PC-9 (cell line): ENCODE measurements at regions of chr9 and their contacts with region 1.

Region 1: DNA sequence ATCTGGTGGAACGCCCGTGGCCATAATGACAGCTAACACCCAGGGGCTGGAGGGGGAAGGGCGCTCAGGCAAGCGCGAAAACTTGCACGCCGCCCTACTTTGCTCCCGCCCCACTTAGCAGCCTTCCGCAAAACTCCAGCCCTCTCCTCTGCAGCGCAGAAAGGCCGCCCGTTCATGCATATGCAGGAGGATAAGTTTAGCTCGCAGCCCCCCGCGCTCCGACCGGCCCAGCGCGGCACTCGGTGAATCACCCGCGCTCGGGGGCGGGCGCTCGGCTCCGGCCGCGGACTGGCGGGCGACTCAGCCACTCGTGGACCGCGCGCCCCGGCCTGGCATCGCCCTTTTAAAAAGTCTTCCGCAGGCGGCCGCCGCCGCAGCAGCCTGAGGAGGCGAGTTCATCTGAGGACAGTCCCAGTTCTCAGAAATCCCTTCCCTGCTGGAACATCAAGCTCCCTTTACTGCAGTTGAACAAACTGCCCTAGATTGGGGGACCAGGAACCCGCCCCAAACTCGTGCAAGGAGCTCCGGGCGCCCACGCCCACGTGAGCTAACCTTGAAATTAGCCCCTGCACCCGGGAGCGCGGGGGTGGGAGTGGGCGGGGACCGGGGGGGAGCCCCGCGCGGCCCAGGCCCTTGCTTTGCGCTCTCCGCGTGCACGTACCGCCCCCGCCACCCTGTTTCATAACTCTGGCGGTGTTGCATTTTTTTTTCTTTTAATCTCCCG is 4.5 kb upstream of the KLF9 start:
- DNase-seq: peak; percentile 85 to 97
- H3K4me3 ChIP-seq: peak overlapping the region; percentile 82
- H3K27ac ChIP-seq: peak overlapping the region; percentile 97
- H3K4me1 ChIP-seq: peaks cover 23% of the 10 kb centered on the region
- H3K27me3 ChIP-seq: no peaks in the 10 kb centered on the region
- CTCF ChIP-seq: no peak

Region 2: GRCh38 chr9:69104830-69105527 is 1314.0 kb before region 1 on chr9:
- CTCF ChIA-PET with region 1: no interaction called
- POLR2A ChIA-PET with region 1: no interaction called
- intact Hi-C with region 1: loop called (anchors 5 kb)
- DNase-seq: peak; percentile 93 to 97
- H3K4me3 ChIP-seq: peak overlapping the region; percentile 25; the same call in 1 of the 2 replicates
- H3K27ac ChIP-seq: peak overlapping the region; percentile 65
- H3K4me1 ChIP-seq: peaks cover 38% of the 10 kb centered on the region
- H3K27me3 ChIP-seq: no peaks in the 10 kb centered on the region
- CTCF ChIP-seq: no peak

Region 3: DNA sequence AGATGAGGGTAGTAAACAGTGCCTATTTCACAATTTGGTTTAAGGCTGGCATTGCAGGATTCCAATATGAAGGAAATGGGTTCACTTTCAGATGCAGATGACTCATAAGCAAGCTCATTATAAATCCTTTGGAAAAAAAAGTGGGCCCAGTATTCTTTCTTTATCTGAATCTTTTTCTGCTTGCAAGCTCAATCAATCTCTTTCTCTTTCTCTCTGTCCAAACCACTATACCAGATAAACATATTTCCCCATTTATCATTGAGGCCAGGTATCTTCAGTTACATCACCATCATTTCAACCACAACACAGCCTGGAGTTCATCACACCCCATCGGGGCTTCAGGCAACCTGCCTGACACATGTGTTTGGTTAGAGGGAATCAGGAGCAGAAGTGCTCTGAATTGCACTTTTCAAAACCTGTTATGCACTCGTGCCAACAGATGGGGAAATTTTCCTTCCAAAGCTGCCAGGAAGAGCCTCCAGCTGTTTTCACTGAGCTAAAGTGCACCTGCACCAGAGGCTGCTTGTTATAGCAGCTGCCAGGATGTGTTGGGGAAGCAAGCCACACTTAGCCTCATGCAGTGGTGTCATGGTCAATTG is 405.3 kb before region 1 on chr9:
- CTCF ChIA-PET with region 1: no interaction called
- POLR2A ChIA-PET with region 1: interaction called, 10 read pairs
- intact Hi-C with region 1: no loop called
- DNase-seq: peak in 1 of 2 experiments; percentile 65
- H3K4me3 ChIP-seq: no peak overlapping the region
- H3K27ac ChIP-seq: peak overlapping the region; percentile 33; the same call in 1 of the 2 replicates
- H3K4me1 ChIP-seq: peaks cover 23% of the 10 kb centered on the region
- H3K27me3 ChIP-seq: no peaks in the 10 kb centered on the region
- CTCF ChIP-seq: no peak

Region 4: GRCh38 chr9:70034292-70034711 is 384.7 kb before region 1 on chr9:
- CTCF ChIA-PET with region 1: no interaction called
- POLR2A ChIA-PET with region 1: no interaction called
- intact Hi-C with region 1: no loop called
- DNase-seq: no peak
- H3K4me3 ChIP-seq: no peak overlapping the region
- H3K27ac ChIP-seq: no peak overlapping the region
- H3K4me1 ChIP-seq: peaks cover 20% of the 10 kb centered on the region
- H3K27me3 ChIP-seq: no peaks in the 10 kb centered on the region
- CTCF ChIP-seq: no peak

Region 5: DNA sequence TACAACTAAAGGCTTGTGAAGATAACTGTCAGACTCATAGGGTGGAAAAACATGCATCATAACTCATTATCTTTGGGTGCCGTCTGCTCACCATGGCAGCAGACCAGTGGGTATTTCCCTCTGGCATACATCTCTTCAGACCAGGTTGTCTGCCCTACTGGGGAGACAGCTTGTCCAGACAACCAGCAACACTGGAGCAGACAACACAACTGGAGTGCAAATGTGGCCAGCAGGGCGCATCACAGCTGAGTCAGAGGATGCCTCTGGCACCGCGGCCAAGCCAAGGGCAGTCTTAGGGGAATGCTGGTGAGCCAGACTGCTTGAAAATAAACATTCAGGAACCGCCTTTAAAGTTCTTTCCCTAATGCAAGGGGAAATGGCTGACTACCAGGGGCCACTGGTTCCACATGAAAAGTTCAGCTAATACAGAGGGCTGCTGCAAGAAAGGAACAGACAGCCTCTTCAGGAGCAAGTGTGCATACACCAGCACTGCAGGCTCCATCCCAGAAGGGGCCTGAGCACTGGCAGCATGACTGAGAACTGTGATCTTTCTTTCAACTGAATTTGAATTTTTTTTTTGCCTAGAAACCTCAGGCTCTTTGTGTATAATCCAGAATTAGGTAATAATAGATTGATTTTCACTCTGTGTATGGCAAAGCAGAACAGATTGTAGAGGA is 298.0 kb before region 1 on chr9:
- CTCF ChIA-PET with region 1: no interaction called
- POLR2A ChIA-PET with region 1: no interaction called
- intact Hi-C with region 1: no loop called
- DNase-seq: peak; percentile 50 to 70
- H3K4me3 ChIP-seq: no peak overlapping the region
- H3K27ac ChIP-seq: no peak overlapping the region
- H3K4me1 ChIP-seq: peaks cover 25% of the 10 kb centered on the region
- H3K27me3 ChIP-seq: no peaks in the 10 kb centered on the region
- CTCF ChIP-seq: no peak

Region 6: DNA sequence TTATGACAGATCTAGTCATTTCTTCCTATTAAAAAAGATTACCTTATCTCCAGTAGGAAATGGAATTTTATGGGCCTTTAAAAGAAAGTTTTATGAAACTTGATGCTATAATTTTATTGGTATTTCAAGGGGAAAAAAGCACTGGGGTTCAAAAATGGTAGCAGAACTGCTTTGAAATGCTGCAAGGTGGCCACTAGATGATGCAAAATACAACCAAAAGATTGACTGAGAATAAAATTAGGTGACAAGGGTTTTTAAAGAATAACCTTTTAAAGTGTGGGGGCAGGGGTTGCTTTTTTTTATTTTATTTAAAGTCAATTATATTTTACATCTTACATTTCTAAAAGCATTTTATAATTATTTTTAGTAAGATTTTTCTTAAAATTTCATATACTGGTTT is 66.2 kb before region 1 on chr9:
- CTCF ChIA-PET with region 1: no interaction called
- POLR2A ChIA-PET with region 1: no interaction called
- intact Hi-C with region 1: loop called (anchors 5 kb)
- DNase-seq: no peak
- H3K4me3 ChIP-seq: no peak overlapping the region
- H3K27ac ChIP-seq: no peak overlapping the region
- H3K4me1 ChIP-seq: no peaks in the 10 kb centered on the region
- H3K27me3 ChIP-seq: no peaks in the 10 kb centered on the region
- CTCF ChIP-seq: peak; percentile 41; the same call in 1 of the 2 replicates

Region 7: GRCh38 chr9:70553707-70554673 is 135.0 kb after region 1 on chr9:
- CTCF ChIA-PET with region 1: no interaction called
- POLR2A ChIA-PET with region 1: interaction called, 7 read pairs
- intact Hi-C with region 1: loop called (anchors 5 kb)
- DNase-seq: peak in 1 of 2 experiments; percentile 65
- H3K4me3 ChIP-seq: no peak overlapping the region
- H3K27ac ChIP-seq: no peak overlapping the region
- H3K4me1 ChIP-seq: peaks cover 9% of the 10 kb centered on the region; the same call in 1 of the 2 replicates
- H3K27me3 ChIP-seq: no peaks in the 10 kb centered on the region
- CTCF ChIP-seq: no peak

Region 8: GRCh38 chr9:70954126-70954525 is 535.1 kb after region 1 on chr9:
- CTCF ChIA-PET with region 1: no interaction called
- POLR2A ChIA-PET with region 1: no interaction called
- intact Hi-C with region 1: loop called (anchors 2 kb)
- DNase-seq: peak; percentile 69 to 70
- H3K4me3 ChIP-seq: no peak overlapping the region
- H3K27ac ChIP-seq: peak overlapping the region; percentile 39; the same call in 1 of the 2 replicates
- H3K4me1 ChIP-seq: peaks cover 18% of the 10 kb centered on the region
- H3K27me3 ChIP-seq: no peaks in the 10 kb centered on the region
- CTCF ChIP-seq: no peak